ENCODE measurements at regions of chr10 and their contacts with region 1.

Region 1: DNA sequence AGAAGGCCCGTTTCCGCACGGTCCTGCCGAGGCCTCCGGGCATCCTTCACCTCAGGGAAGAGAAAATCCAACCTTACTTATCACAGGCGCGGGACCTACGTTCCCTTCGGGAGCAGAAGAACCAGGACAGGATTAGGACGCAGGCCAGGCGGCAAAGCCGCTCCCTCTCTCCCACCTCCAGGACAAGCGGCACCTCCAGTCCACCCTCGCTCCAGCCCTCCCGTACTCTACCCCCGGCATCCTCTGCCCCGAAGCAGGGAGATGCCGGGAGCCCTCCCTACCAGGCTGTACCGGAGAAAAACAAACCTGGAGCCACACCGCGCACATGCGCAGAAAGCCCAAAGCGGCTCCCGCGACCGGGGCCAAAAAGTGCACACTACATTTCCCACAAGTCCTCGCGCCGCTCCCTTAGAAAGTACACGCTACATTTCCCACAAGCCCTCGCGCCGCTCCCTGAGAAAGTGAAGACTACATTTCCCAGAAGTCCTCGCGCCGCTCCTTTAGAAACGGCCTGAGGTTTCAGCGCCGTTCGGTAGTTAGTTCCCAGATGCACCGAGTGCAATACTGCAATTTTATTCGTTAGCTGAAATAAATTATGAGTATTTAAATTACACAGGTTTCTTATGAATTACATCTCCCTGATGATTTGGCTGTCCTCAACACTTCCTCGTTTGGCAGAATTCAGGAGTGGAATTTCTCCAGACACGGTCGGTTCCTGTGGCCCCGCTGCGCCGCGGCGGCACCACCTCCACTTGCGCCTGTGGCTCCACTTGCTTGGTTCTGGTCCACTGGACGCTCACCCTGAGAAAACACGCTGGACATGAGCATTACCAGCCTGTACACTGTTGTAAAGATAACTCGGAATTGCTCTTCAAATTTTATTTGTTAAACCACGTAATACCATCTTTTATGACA is 85.6 kb downstream of the ZNF33B start:
- DNase-seq: peak; percentile 99
- H3K4me3 ChIP-seq: peak overlapping the region; percentile 79 to 86 (median 82)
- H3K27ac ChIP-seq: peak overlapping the region; percentile 81 to 83 (median 82)
- H3K4me1 ChIP-seq: peaks cover 10 to 26% (median 25%) of the 10 kb centered on the region in 4 donors
- H3K27me3 ChIP-seq: no peaks in the 10 kb centered on the region
- CTCF ChIP-seq: peak in 1 of 3 experiments; percentile 18
- EP300 ChIP-seq: peak; percentile 24
- POLR2A ChIP-seq: no peak

Region 2: GRCh38 chr10:42638055-42638820 is 85.5 kb after region 1 on chr10 and contains the start of gene ZNF33B:
- intact Hi-C with region 1: loop called (anchors 5 kb)
- DNase-seq: peak; percentile 96
- H3K4me3 ChIP-seq: peak within 1 kb of the TSS; percentile 75 to 98 (median 80)
- H3K27ac ChIP-seq: peak within 1 kb of the TSS; percentile 91 to 96 (median 94)
- H3K4me1 ChIP-seq: peaks cover 0 to 20% (median 10%) of the 10 kb centered on the region in 4 donors
- H3K27me3 ChIP-seq: no peaks in the 10 kb centered on the region
- CTCF ChIP-seq: no peak
- EP300 ChIP-seq: no peak
- POLR2A ChIP-seq: no peak
- total RNA-seq, gene ZNF33B: 10.8 to 18.4 (median 15.9) TPM

Region 3: DNA sequence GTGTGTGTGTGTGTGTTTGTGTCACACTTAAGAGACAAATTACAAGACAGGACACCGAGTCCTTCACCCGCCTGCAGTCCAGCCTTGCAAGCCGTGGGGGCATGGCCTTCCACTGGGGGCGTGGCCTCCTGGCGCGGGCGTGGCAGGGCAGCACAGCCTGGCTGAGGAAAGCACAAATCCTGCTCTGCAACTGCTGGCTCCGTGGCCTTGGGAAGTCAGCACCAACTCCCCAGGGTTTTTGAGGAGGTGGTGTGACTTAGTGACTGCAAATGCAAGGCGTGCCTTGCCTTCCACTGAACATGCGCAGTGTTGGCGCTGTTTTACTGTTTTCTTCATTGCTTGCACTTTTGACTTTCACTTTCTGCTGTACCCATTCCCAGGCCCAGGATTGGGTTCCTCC is 216.9 kb after region 1 on chr10:
- intact Hi-C with region 1: no loop called
- DNase-seq: peak; percentile 26
- H3K4me3 ChIP-seq: no peak overlapping the region
- H3K27ac ChIP-seq: no peak overlapping the region
- H3K4me1 ChIP-seq: no peaks in the 10 kb centered on the region
- H3K27me3 ChIP-seq: peaks cover 0 to 29% (median 0%) of the 10 kb centered on the region in 4 donors
- CTCF ChIP-seq: no peak
- EP300 ChIP-seq: no peak
- POLR2A ChIP-seq: no peak